GM12878 (cell line): ENCODE measurements at regions of chr9 and their contacts with region 1.

Region 1: DNA sequence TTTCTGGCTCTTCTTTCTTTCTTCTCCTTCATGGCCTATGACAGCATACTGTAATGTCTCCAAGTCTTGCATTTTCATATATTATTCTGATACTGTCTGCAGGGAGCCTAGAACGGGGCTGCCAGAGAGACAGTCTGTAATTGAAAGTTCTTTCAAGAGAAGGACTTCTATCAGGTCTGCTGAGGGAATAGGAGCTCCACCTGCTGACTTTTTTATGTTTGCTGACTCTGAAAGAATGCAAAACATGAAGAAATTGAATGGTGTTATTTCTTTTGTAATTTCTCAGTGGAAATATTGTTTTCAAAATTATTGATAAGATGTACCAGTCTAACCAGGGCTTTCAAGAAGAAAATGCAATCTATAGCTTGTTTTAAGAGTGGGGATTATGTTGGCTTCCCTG is 121.9 kb upstream of the RFX3 start:
- DNase-seq: no peak
- ATAC-seq: no peak
- H3K4me3 ChIP-seq: no peak overlapping the region
- H3K27ac ChIP-seq: no peak overlapping the region
- H3K4me1 ChIP-seq: no peaks in the 10 kb centered on the region
- H3K27me3 ChIP-seq: no peaks in the 10 kb centered on the region
- CTCF ChIP-seq: peak in 1 of 3 experiments; percentile 36; a peak in 2 of 6 replicates
- EP300 ChIP-seq: no peak
- POLR2A ChIP-seq: no peak
- RAD21 ChIP-seq: peak; percentile 54

Region 2: DNA sequence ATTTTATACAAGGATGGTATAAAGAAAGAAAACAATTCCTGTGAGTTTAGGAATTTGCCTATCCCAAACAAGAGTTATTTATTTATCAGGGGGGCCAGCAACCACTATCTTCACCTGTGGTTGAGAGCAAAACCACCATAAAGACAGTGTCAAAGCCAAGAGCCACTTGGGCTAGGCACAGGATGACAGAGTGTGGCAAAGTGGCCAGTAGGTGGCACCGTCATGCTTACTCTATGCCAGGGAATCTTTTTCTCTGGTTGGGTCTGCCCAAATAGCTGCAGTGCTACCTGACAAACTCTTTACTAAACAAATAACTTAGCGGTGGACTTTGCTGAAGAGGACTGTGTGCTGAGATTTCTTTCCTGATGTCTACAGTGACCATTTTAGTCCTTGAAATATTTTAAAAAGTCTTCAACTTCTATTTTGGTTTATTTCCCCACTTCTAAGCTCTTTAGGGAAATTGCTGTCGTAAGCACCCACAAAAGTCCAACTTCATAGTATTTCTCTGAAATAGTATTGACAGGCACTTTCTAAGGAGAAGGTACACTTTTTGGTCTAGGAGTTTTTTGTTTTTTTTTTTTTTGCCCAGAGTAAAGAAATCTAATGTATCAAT is 406.9 kb before region 1 on chr9:
- CTCF ChIA-PET with region 1: interaction called, 9 read pairs
- POLR2A ChIA-PET with region 1: no interaction called
- RAD21 ChIA-PET with region 1: no interaction called
- SMC1A ChIA-PET with region 1: interaction called, 7 read pairs
- in situ Hi-C with region 1: no loop called
- intact Hi-C with region 1: loop called (anchors 10 kb)
- DNase-seq: peak; percentile 35
- ATAC-seq: peak; percentile 97
- H3K4me3 ChIP-seq: no peak overlapping the region
- H3K27ac ChIP-seq: no peak overlapping the region
- H3K4me1 ChIP-seq: peaks cover 10% of the 10 kb centered on the region; the same call in 1 of the 2 replicates
- H3K27me3 ChIP-seq: no peaks in the 10 kb centered on the region
- CTCF ChIP-seq: peak; percentile 81 to 93 (median 86); a peak in 5 of 6 replicates
- EP300 ChIP-seq: no peak
- POLR2A ChIP-seq: no peak
- RAD21 ChIP-seq: peak; percentile 89

Region 3: GRCh38 chr9:3261484-3261883 is 386.2 kb before region 1 on chr9:
- CTCF ChIA-PET with region 1: no interaction called
- POLR2A ChIA-PET with region 1: no interaction called
- RAD21 ChIA-PET with region 1: no interaction called
- SMC1A ChIA-PET with region 1: no interaction called
- in situ Hi-C with region 1: no loop called
- intact Hi-C with region 1: no loop called
- DNase-seq: no peak
- ATAC-seq: no peak
- H3K4me3 ChIP-seq: no peak overlapping the region
- H3K27ac ChIP-seq: no peak overlapping the region
- H3K4me1 ChIP-seq: peaks cover 4% of the 10 kb centered on the region; the same call in 1 of the 2 replicates
- H3K27me3 ChIP-seq: no peaks in the 10 kb centered on the region
- CTCF ChIP-seq: no peak
- EP300 ChIP-seq: no peak
- POLR2A ChIP-seq: no peak
- RAD21 ChIP-seq: no peak

Region 4: GRCh38 chr9:3473405-3473804 is 174.2 kb before region 1 on chr9:
- CTCF ChIA-PET with region 1: interaction called, 27 read pairs
- POLR2A ChIA-PET with region 1: no interaction called
- RAD21 ChIA-PET with region 1: interaction called, 16 read pairs
- SMC1A ChIA-PET with region 1: interaction called, 8 read pairs
- in situ Hi-C with region 1: loop called (anchors 5 kb)
- intact Hi-C with region 1: no loop called
- DNase-seq: no peak
- ATAC-seq: peak; percentile 64
- H3K4me3 ChIP-seq: no peak overlapping the region
- H3K27ac ChIP-seq: peak overlapping the region; percentile 40
- H3K4me1 ChIP-seq: peaks cover 37% of the 10 kb centered on the region
- H3K27me3 ChIP-seq: no peaks in the 10 kb centered on the region
- CTCF ChIP-seq: peak in 1 of 3 experiments; percentile 32; a peak in 1 of 6 replicates
- EP300 ChIP-seq: no peak
- POLR2A ChIP-seq: no peak
- RAD21 ChIP-seq: peak; percentile 33; the same call in 1 of the 2 replicates

Region 5: GRCh38 chr9:3571500-3571899 is 76.2 kb before region 1 on chr9:
- CTCF ChIA-PET with region 1: no interaction called
- POLR2A ChIA-PET with region 1: no interaction called
- RAD21 ChIA-PET with region 1: no interaction called
- SMC1A ChIA-PET with region 1: no interaction called
- in situ Hi-C with region 1: no loop called
- intact Hi-C with region 1: no loop called
- DNase-seq: no peak
- ATAC-seq: no peak
- H3K4me3 ChIP-seq: no peak overlapping the region
- H3K27ac ChIP-seq: no peak overlapping the region
- H3K4me1 ChIP-seq: no peaks in the 10 kb centered on the region
- H3K27me3 ChIP-seq: no peaks in the 10 kb centered on the region
- CTCF ChIP-seq: no peak
- EP300 ChIP-seq: no peak
- POLR2A ChIP-seq: no peak
- RAD21 ChIP-seq: no peak